Activated CD4-positive, alpha-beta memory T cell treated with anti-CD3 and anti-CD28 coated beads for 36 hours (primary cell): ENCODE measurements at regions of chr1 and their contacts with region 1.

Region 1: GRCh38 chr1:247078261-247079140 is at the start of gene ZNF670:
- DNase-seq: peak; percentile 96
- H3K4me3 Mint-ChIP-seq: peak within 1 kb of the TSS; percentile 90
- H3K27ac Mint-ChIP-seq: peak within 1 kb of the TSS; percentile 85
- H3K4me1 Mint-ChIP-seq: peaks cover 24% of the 10 kb centered on the region
- H3K27me3 Mint-ChIP-seq: peaks cover 3% of the 10 kb centered on the region
- total RNA-seq, gene ZNF670: 3.9 to 4.5 TPM

Region 2: DNA sequence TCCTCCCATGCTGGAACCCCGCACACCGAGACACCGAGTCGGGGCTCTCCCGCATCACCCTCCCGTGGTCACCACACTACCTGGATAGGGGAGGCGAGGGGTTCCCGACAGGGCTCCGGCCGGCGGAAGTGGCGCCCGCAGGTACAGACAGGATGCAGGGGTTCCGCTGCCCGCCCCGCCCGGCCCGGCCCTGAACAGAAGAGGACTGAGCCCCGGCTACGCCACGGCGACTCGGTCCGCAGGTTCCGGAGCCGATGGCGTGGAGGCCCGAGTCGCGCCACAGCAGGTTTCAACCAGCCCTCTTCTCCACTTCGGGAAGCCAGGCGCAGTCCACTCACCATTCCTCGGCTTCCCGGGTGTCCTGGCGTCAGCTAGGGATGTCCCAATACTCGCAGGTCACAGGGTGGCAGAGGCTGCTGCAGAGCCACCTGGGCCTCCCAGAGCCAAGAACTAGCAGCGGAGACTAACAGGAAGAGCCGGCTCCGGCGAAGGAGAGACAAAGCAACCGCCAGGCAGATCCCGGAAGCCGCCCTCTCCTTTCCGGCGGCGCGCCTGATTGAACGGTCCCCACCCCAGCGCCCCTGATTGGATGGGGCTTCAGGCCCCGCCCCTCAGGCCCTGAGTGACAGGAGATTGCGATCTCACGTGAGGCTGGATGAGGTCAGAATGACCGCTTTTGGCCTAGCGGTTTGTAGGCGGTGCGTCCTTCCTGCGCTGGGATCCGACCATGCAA is 25.5 kb after region 1 on chr1 and contains the start of gene ZNF669:
- CTCF ChIA-PET with region 1: no interaction called
- POLR2A ChIA-PET with region 1: interaction called, 3 read pairs
- intact Hi-C with region 1: loop called (anchors 1 kb)
- DNase-seq: peak; percentile 96
- H3K4me3 Mint-ChIP-seq: peak within 1 kb of the TSS; percentile 87
- H3K27ac Mint-ChIP-seq: peak within 1 kb of the TSS; percentile 88
- H3K4me1 Mint-ChIP-seq: peaks cover 16% of the 10 kb centered on the region
- H3K27me3 Mint-ChIP-seq: peaks cover 24% of the 10 kb centered on the region
- total RNA-seq, gene ZNF669: 7.9 to 8.4 TPM